Activated CD4-positive, alpha-beta memory T cell treated with anti-CD3 and anti-CD28 coated beads for 36 hours (primary cell): ENCODE measurements at regions of chr19 and their contacts with region 1.

Region 1: DNA sequence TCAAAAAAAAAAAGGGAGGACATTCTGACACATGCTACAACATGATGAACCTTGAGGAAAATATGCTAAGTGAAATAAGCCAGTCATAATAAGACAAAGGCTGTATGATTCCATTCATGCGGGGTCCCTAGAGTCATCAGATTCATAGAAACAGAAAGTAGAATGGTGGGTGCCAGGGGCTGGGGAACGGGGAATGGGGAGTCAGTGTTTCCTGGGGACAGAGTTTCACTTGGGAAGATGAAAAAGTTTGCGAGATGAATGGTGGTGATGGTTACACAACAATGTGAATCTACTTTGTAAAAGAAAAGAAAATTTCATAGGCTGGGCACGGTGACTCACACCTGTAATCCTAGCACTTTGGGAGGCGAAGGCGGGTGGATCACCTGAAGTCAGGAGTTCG is 6.1 kb upstream of the CLEC4G start:
- DNase-seq: peak; percentile 76
- H3K4me3 Mint-ChIP-seq: no peak overlapping the region
- H3K27ac Mint-ChIP-seq: peak overlapping the region; percentile 54
- H3K4me1 Mint-ChIP-seq: peaks cover 11% of the 10 kb centered on the region
- H3K27me3 Mint-ChIP-seq: peaks cover 46% of the 10 kb centered on the region

Region 2: GRCh38 chr19:7699417-7700401 is 38.3 kb before region 1 on chr19:
- CTCF ChIA-PET with region 1: no interaction called
- POLR2A ChIA-PET with region 1: no interaction called
- intact Hi-C with region 1: loop called (anchors 1 kb)
- DNase-seq: peak; percentile 81
- H3K4me3 Mint-ChIP-seq: peak overlapping the region; percentile 6
- H3K27ac Mint-ChIP-seq: peak overlapping the region; percentile 39
- H3K4me1 Mint-ChIP-seq: peaks cover 16% of the 10 kb centered on the region
- H3K27me3 Mint-ChIP-seq: peaks cover 21% of the 10 kb centered on the region

Region 3: DNA sequence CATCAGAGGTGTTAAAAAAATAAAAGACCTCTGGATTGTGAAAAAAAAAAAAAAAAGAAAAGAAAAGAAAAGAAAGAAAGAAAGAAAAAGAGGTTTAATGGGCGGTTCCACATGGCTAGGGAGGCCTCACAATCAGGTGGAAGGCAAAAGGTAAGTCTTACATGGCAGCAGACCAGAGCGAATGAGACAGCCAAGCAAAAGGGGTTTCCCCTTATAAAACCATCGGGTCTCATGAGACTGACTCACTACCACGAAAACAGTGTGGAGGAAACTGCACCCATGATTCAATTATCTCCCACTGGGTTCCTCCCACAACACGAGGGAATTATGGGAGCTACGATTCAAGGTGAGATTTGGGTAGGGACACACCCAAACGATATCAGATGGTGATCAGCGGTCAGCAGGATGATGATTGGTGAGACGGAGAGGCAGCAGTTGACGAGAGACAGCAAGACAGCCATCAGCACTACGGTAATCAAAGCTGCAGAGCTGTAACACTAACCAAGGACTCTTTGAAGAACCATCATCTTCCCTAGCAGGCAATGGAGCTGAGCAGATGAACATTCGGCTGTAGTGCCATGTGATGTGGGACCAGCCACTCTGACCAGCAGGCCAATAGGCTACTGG is 13.2 kb after region 1 on chr19:
- CTCF ChIA-PET with region 1: interaction called, 4 read pairs
- POLR2A ChIA-PET with region 1: no interaction called
- intact Hi-C with region 1: loop called (anchors 1 kb)
- DNase-seq: peak; percentile 67
- H3K4me3 Mint-ChIP-seq: no peak overlapping the region
- H3K27ac Mint-ChIP-seq: peak overlapping the region; percentile 35
- H3K4me1 Mint-ChIP-seq: peaks cover 28% of the 10 kb centered on the region
- H3K27me3 Mint-ChIP-seq: peaks cover 22% of the 10 kb centered on the region

Region 4: GRCh38 chr19:7772752-7773291 is 34.8 kb after region 1 on chr19:
- CTCF ChIA-PET with region 1: no interaction called
- POLR2A ChIA-PET with region 1: no interaction called
- intact Hi-C with region 1: loop called (anchors 1 kb)
- DNase-seq: peak; percentile 63
- H3K4me3 Mint-ChIP-seq: peak overlapping the region; percentile 41
- H3K27ac Mint-ChIP-seq: peak overlapping the region; percentile 61
- H3K4me1 Mint-ChIP-seq: peaks cover 18% of the 10 kb centered on the region
- H3K27me3 Mint-ChIP-seq: peaks cover 34% of the 10 kb centered on the region

Region 5: GRCh38 chr19:7908742-7909461 is 170.9 kb after region 1 on chr19:
- CTCF ChIA-PET with region 1: no interaction called
- POLR2A ChIA-PET with region 1: no interaction called
- intact Hi-C with region 1: no loop called
- DNase-seq: no peak
- H3K4me3 Mint-ChIP-seq: no peak overlapping the region
- H3K27ac Mint-ChIP-seq: no peak overlapping the region
- H3K4me1 Mint-ChIP-seq: peaks cover 15% of the 10 kb centered on the region
- H3K27me3 Mint-ChIP-seq: no peaks in the 10 kb centered on the region